ENCODE measurements at regions of chr3 and their contacts with region 1.

Region 1: GRCh38 chr3:115397433-115397832 is 225.9 kb upstream of the GAP43 start:
- DNase-seq: no peak
- H3K4me3 ChIP-seq: no peak overlapping the region
- H3K27ac ChIP-seq: no peak overlapping the region
- H3K4me1 ChIP-seq: no peaks in the 10 kb centered on the region
- H3K27me3 ChIP-seq: no peaks in the 10 kb centered on the region
- CTCF ChIP-seq: no peak
- POLR2A ChIP-seq: no peak

Region 2: DNA sequence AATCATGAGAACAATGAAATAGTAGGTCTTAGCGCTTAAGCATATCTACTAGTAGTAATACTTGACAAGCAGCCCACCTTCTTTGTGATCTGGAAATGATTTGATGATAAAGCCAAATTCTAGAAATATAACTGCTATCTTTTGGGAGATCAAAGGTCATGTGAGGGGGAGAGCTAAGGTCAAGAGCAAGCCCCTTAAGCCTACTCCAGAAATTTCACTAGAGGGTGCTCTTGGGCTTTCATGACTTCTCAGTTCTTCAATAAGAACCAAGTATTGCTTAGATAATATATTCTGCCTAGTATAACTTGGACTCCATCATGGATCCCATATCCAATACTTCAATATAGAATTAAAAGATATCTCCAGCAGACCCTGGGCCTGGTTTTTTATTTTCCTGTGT is 569.9 kb before region 1 on chr3:
- intact Hi-C with region 1: loop called (anchors 5 kb)
- DNase-seq: no peak
- H3K4me3 ChIP-seq: no peak overlapping the region
- H3K27ac ChIP-seq: no peak overlapping the region
- H3K4me1 ChIP-seq: peaks cover 0 to 6% of the 10 kb centered on the region in 2 donors
- H3K27me3 ChIP-seq: no peaks in the 10 kb centered on the region
- CTCF ChIP-seq: peak in 2 of 3 donors; percentile 35 to 39
- POLR2A ChIP-seq: no peak

Region 3: GRCh38 chr3:115623044-115623868 is 225.8 kb after region 1 on chr3 and contains the start of gene GAP43:
- intact Hi-C with region 1: no loop called
- DNase-seq: no peak
- H3K4me3 ChIP-seq: peak within 1 kb of the TSS; percentile 8 to 55 (median 27)
- H3K27ac ChIP-seq: no peak within 1 kb of the TSS
- H3K4me1 ChIP-seq: no peaks in the 10 kb centered on the region
- H3K27me3 ChIP-seq: peaks cover 0 to 18% of the 10 kb centered on the region in 2 donors
- CTCF ChIP-seq: no peak
- POLR2A ChIP-seq: no peak
- total RNA-seq, gene GAP43: 0.16 TPM in 1 of 3 donors, not detected in the others

Measured in breast epithelium (tissue), 4 donors.